IMR-90 (cell line): ENCODE measurements at regions of chr2 and their contacts with region 1.

Region 1: GRCh38 chr2:134245340-134245984 is 8.4 kb upstream of the MGAT5 start:
- DNase-seq: peak; percentile 71
- ATAC-seq: peak; percentile 52
- H3K4me3 ChIP-seq: no peak overlapping the region
- H3K27ac ChIP-seq: no peak overlapping the region
- H3K4me1 ChIP-seq: peaks cover 11% of the 10 kb centered on the region
- H3K27me3 ChIP-seq: no peaks in the 10 kb centered on the region
- CTCF ChIP-seq: peak; percentile 74
- POLR2A ChIP-seq: no peak
- RAD21 ChIP-seq: peak; percentile 77

Region 2: GRCh38 chr2:134019871-134020270 is 225.6 kb before region 1 on chr2:
- CTCF ChIA-PET with region 1: no interaction called
- POLR2A ChIA-PET with region 1: no interaction called
- dilution Hi-C with region 1: no loop called
- in situ Hi-C with region 1: no loop called
- intact Hi-C with region 1: loop called (anchors 5 kb)
- DNase-seq: no peak
- ATAC-seq: no peak
- H3K4me3 ChIP-seq: no peak overlapping the region
- H3K27ac ChIP-seq: no peak overlapping the region
- H3K4me1 ChIP-seq: peaks cover 10% of the 10 kb centered on the region
- H3K27me3 ChIP-seq: no peaks in the 10 kb centered on the region
- CTCF ChIP-seq: no peak
- POLR2A ChIP-seq: no peak
- RAD21 ChIP-seq: no peak